BJ (cell line): ENCODE measurements at regions of chr12 and their contacts with region 1.

Region 1: GRCh38 chr12:114476159-114476558 is 70.2 kb upstream of the TBX5 start:
- DNase-seq: no peak
- H3K4me3 ChIP-seq: no peak overlapping the region
- H3K27me3 ChIP-seq: peaks cover 10% of the 10 kb centered on the region
- CTCF ChIP-seq: peak; percentile 61

Region 2: GRCh38 chr12:114166362-114166761 is 309.8 kb before region 1 on chr12:
- CTCF ChIA-PET with region 1: interaction called, 19 read pairs
- POLR2A ChIA-PET with region 1: no interaction called
- DNase-seq: no peak
- H3K4me3 ChIP-seq: no peak overlapping the region
- H3K27me3 ChIP-seq: no peaks in the 10 kb centered on the region
- CTCF ChIP-seq: peak; percentile 63

Region 3: GRCh38 chr12:114274131-114274530 is 202.0 kb before region 1 on chr12:
- CTCF ChIA-PET with region 1: no interaction called
- POLR2A ChIA-PET with region 1: no interaction called
- DNase-seq: no peak
- H3K4me3 ChIP-seq: no peak overlapping the region
- H3K27me3 ChIP-seq: peaks cover 10% of the 10 kb centered on the region
- CTCF ChIP-seq: no peak

Region 4: DNA sequence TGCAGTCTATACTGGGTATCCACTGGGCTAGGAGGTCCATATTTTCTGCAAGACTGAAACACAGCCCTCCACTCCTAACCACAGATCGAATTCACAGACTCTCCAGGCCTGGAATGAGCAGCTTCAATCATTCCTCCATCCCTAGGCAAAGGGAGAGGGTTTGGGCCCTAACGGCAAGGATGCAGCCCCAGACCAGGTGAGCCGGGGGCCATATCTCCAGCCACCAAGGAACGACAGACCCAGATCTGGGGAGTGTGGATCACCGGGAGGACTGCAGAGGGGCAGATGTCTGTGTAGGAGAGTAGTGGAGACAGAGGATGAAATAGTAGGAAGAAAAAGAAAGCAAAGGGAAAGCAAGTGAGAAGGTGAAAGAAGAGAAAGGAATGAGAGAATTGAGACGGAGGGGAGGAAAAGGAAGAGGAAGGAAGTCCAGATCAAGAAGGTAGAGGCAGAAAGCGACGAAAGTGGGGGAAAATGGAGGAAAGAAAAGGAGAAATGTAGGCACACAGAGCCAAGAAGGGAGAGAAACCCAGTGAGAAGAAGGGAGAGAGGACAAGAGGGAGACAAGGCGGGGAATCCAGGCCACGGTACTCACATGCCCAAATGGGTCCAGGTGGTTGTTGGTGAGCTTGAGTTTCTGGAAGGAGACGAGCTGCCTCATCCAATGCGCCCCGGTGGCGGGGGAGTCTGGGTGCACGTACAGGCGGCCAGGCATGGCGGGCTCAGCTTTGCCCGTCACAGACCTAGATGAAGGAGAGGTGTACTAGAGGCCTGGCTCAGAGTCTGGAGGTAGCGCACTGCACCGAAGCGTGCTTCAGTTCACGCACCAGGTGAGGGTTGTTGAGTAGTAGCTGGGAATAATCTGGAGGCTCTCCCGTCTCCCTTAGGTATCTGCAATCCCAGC is 77.9 kb before region 1 on chr12:
- CTCF ChIA-PET with region 1: interaction called, 3 read pairs
- POLR2A ChIA-PET with region 1: interaction called, 11 read pairs
- DNase-seq: no peak
- H3K4me3 ChIP-seq: peak overlapping the region; percentile 90
- H3K27me3 ChIP-seq: no peaks in the 10 kb centered on the region
- CTCF ChIP-seq: no peak

Region 5: DNA sequence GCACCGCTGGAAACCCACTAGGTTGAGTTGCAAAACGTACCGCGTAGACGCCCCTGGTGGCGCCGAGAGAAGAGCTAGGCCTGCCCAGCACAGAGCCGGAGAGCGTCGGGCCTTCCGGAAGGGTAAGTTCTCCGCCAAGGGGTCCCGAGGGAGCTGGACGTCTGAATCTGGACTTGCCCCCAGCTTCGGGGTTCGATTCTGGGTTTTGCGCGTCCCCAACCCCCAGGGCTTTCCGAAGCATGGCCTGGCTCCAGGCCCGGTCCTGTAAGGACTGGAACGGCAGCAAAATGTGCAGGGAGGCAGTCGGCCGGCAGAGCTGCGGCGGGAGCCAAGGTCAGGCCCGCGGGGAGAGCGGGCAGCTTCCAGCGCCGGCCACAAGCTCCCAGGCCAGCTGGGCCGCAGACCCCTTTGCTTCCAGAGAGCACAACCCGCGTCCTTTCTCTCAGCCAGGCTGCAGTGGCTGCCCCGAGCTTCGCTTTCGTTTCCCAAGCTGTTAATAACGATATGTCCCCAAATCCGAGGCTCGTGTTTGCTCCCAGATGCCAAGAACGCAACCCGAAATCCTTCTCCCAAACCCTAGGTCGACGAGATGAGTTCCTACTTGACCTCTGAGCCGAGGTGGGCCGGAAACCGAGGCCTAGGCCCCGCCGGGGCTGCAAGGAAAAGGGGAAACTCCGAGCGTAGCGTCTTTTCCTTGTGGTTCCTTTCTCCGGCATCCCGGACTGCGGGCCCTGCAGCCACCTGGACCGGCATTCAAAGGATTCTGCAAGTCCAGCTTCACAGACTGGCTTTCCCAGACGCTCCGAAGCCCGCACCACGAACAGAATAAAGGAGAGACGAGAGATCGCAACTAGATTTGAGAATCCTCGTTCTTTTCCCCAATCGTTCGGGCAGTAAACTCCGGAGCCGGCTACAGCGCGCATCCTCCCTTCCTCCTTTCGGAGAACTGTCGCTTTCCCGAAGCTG is 67.0 kb before region 1 on chr12:
- CTCF ChIA-PET with region 1: interaction called, 26 read pairs
- POLR2A ChIA-PET with region 1: interaction called, 16 read pairs
- DNase-seq: no peak
- H3K4me3 ChIP-seq: peak overlapping the region; percentile 90
- H3K27me3 ChIP-seq: no peaks in the 10 kb centered on the region
- CTCF ChIP-seq: no peak

Region 6: DNA sequence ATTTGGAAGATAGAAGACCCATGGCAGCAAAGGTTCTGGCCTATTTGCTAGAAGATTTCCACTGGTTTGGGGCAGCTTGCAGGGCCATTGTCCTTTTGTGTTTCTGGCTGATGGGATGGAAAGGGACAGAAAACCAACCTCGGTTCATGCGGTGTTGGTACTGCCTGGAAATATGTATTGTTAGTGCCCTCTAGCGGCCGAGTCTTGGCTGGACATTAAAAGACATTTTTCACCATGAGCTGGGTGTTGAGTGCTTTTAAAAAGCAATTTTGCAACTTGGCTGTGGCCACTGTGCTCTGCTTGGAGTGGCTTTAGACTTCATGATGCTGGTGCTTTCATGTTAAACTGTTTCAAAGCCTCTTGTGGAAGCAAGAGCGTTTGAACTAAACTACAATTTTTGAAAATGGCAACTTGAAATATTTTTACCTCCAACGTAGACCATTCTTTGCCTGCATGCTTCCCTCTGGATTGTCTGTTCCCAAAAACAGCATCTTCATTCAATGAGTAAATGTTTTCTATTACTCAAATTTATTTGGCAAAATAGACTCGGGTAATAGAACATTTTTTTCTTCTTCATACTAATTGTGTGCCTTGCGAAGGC is 32.5 kb after region 1 on chr12:
- CTCF ChIA-PET with region 1: interaction called, 20 read pairs
- POLR2A ChIA-PET with region 1: interaction called, 10 read pairs
- DNase-seq: peak; percentile 24
- H3K4me3 ChIP-seq: no peak overlapping the region
- H3K27me3 ChIP-seq: no peaks in the 10 kb centered on the region
- CTCF ChIP-seq: peak; percentile 76